Heart left ventricle (tissue), 16 donors: ENCODE measurements at regions of chr9 and their contacts with region 1.

Region 1: GRCh38 chr9:68704814-68705530 is at the start of gene PIP5K1B:
- DNase-seq: peak; percentile 76 to 87 (median 84)
- ATAC-seq: peak; percentile 57 to 92 (median 86)
- H3K4me3 ChIP-seq: peak within 1 kb of the TSS; percentile 44 to 94 (median 68)
- H3K27ac ChIP-seq: peak within 1 kb of the TSS; percentile 71 to 95 (median 88)
- H3K4me1 ChIP-seq: peaks cover 0 to 31% (median 12%) of the 10 kb centered on the region in 12 donors
- H3K27me3 ChIP-seq: peaks cover 0 to 24% (median 5%) of the 10 kb centered on the region in 9 donors
- CTCF ChIP-seq: peak in 4 of 12 donors; percentile 19 to 36 (median 24)
- POLR2A ChIP-seq: peak in 1 of 2 donors; percentile 59
- total RNA-seq, gene PIP5K1B: 28.0 to 68.0 (median 47.5) TPM

Region 2: GRCh38 chr9:68601081-68601480 is 103.9 kb before region 1 on chr9:
- intact Hi-C with region 1: loop called in 1 of 10 experiments (anchors 5 kb)
- DNase-seq: no peak
- ATAC-seq: no peak
- H3K4me3 ChIP-seq: no peak overlapping the region
- H3K27ac ChIP-seq: no peak overlapping the region
- H3K4me1 ChIP-seq: no peaks in the 10 kb centered on the region
- H3K27me3 ChIP-seq: no peaks in the 10 kb centered on the region
- CTCF ChIP-seq: no peak
- POLR2A ChIP-seq: no peak

Region 3: DNA sequence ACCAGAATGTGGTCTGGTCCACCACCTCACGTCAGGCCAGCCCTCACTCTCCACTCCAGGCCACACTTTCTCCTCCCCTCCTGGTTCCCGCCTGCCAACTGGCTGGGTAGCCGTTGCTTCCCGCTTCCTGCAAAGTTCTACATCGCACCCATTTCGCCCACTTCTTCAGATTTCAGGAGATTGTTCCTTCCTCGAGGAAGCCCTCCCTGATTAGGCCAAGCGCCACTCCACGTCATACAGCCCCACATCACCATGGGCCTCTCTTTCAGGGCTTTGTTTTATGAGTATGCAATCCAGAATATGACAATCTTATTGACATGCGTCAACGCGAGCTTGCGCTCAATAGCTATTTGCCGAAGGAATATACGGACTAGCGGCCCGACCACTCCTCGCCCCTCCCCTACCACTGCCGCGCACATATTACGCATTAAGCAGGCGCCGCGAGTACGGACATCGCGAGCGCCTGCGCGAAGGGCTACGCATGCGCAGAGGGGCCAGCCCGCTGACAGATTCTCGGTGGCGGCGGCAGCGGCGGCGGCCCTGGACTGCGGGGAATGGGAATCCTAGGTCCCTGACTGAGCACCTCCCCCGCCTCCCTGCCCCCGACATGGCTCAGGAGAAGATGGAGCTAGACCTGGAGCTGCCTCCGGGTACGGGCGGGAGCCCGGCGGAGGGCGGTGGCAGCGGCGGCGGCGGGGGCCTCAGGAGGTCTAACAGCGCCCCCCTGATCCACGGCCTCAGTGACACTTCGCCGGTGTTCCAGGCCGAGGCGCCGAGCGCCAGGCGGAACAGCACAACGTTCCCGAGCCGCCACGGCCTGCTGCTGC is 74.8 kb after region 1 on chr9:
- intact Hi-C with region 1: loop called in 7 of 10 experiments (anchors 1 to 5 kb)
- DNase-seq: peak; percentile 95 to 98 (median 97)
- ATAC-seq: peak; percentile 88 to 95 (median 94)
- H3K4me3 ChIP-seq: peak overlapping the region; percentile 49 to 89 (median 74)
- H3K27ac ChIP-seq: peak overlapping the region; percentile 83 to 97 (median 94)
- H3K4me1 ChIP-seq: peaks cover 8 to 77% (median 60%) of the 10 kb centered on the region in 12 donors
- H3K27me3 ChIP-seq: no peaks in the 10 kb centered on the region
- CTCF ChIP-seq: peak in 9 of 12 donors; percentile 28 to 67 (median 43)
- POLR2A ChIP-seq: peak; percentile 43 to 93

Region 4: DNA sequence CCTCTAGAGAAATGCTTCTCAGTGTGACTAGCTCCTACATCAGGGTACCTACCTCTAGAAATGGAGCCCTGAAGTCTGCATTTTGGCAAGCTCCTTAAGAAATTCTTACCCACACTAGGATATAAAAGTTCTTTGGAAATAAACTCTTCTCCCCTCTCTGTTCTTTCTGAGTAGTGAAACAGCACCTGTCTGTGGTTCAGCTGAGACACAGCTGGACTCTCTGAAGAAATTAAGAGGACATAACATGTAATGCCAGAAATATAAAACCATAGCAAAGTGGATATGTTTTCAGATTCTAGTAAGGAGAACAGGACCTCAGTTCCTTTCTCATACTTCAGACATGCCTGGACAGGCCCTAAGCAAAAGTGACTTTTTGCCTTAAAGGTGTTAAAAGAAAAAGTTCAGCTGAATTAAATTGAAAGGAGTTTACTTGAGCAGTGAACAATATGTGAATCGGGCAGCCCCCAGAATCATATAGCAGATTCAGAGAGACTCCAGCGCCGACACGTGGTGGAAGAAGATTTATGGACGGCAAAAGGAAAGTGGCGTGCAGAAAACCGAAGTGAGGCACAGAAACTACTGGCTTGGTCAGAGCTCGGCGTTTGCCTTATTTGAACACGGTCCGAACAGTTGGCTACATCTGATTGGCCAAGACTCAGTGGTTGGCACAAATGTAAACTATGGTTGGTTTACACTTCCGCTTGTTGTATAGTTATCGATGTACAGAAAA is 244.5 kb after region 1 on chr9:
- intact Hi-C with region 1: loop called in 2 of 10 experiments (anchors 2 to 10 kb)
- DNase-seq: no peak
- ATAC-seq: peak in 3 of 4 donors; percentile 7 to 52 (median 38)
- H3K4me3 ChIP-seq: no peak overlapping the region
- H3K27ac ChIP-seq: no peak overlapping the region
- H3K4me1 ChIP-seq: peaks cover 0 to 7% (median 0%) of the 10 kb centered on the region in 12 donors
- H3K27me3 ChIP-seq: no peaks in the 10 kb centered on the region
- CTCF ChIP-seq: peak in 7 of 12 donors; percentile 9 to 28 (median 16)
- POLR2A ChIP-seq: no peak

Region 5: GRCh38 chr9:69027355-69028096 is 322.6 kb after region 1 on chr9:
- intact Hi-C with region 1: loop called in 2 of 10 experiments (anchors 2 to 5 kb)
- DNase-seq: no peak
- ATAC-seq: peak in 3 of 4 donors; percentile 76 to 82 (median 82)
- H3K4me3 ChIP-seq: no peak overlapping the region
- H3K27ac ChIP-seq: no peak overlapping the region
- H3K4me1 ChIP-seq: peaks cover 0 to 20% (median 0%) of the 10 kb centered on the region in 12 donors
- H3K27me3 ChIP-seq: no peaks in the 10 kb centered on the region
- CTCF ChIP-seq: peak; percentile 68 to 87 (median 76)
- POLR2A ChIP-seq: no peak